ENCODE measurements at regions of chr5 and their contacts with region 1.

Region 1: GRCh38 chr5:107571621-107572536 is 98.9 kb downstream of the EFNA5 start:
- DNase-seq: peak; percentile 73
- H3K4me3 Mint-ChIP-seq: peak overlapping the region; percentile 73
- H3K27ac Mint-ChIP-seq: no peak overlapping the region
- H3K4me1 Mint-ChIP-seq: peaks cover 21% of the 10 kb centered on the region
- H3K27me3 Mint-ChIP-seq: peaks cover 23% of the 10 kb centered on the region

Region 2: GRCh38 chr5:107149243-107150005 is 422.5 kb before region 1 on chr5:
- intact Hi-C with region 1: loop called (anchors 10 kb)
- DNase-seq: no peak
- H3K4me3 Mint-ChIP-seq: no peak overlapping the region
- H3K27ac Mint-ChIP-seq: no peak overlapping the region
- H3K4me1 Mint-ChIP-seq: no peaks in the 10 kb centered on the region
- H3K27me3 Mint-ChIP-seq: peaks cover 2% of the 10 kb centered on the region

Region 3: DNA sequence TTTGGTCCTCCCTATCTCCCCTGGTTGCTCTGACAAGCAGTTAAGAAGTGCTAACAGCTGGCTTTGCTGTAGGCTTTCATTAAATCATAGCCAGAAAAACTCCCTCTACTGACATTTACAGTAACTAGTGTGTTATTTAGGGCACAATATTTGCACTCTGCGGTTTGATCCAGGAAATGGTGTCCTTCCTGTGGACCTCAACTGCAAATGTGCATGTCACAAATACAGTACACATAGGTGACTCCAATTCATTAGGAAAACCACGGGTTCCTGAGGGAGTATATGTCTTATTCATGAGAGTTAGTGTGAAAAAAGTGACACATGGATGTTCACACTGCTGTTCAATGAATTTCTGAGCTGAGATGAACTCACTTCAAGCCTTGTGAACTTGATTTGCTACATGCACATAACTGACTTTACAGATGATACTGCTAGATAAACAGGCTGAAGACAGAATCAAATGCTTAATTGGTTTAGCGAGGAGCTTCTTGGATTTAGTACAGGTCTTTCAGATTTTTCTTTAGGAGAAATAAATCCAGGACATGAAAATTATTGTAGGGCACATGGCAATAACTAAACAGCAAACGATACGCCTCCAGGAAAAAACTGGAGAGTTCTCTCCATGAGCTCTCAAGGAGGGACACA is 182.6 kb before region 1 on chr5:
- intact Hi-C with region 1: loop called (anchors 2 kb)
- DNase-seq: peak; percentile 13
- H3K4me3 Mint-ChIP-seq: peak overlapping the region; percentile 50
- H3K27ac Mint-ChIP-seq: peak overlapping the region; percentile 74
- H3K4me1 Mint-ChIP-seq: peaks cover 29% of the 10 kb centered on the region
- H3K27me3 Mint-ChIP-seq: no peaks in the 10 kb centered on the region

Region 4: GRCh38 chr5:107486489-107486888 is 85.4 kb before region 1 on chr5:
- intact Hi-C with region 1: loop called (anchors 2 kb)
- DNase-seq: peak; percentile 29
- H3K4me3 Mint-ChIP-seq: no peak overlapping the region
- H3K27ac Mint-ChIP-seq: no peak overlapping the region
- H3K4me1 Mint-ChIP-seq: peaks cover 21% of the 10 kb centered on the region
- H3K27me3 Mint-ChIP-seq: peaks cover 11% of the 10 kb centered on the region

Region 5: GRCh38 chr5:107673368-107674136 is 101.7 kb after region 1 on chr5:
- intact Hi-C with region 1: loop called (anchors 2 kb)
- DNase-seq: peak; percentile 44
- H3K4me3 Mint-ChIP-seq: peak overlapping the region; percentile 68
- H3K27ac Mint-ChIP-seq: peak overlapping the region; percentile 32
- H3K4me1 Mint-ChIP-seq: peaks cover 22% of the 10 kb centered on the region
- H3K27me3 Mint-ChIP-seq: peaks cover 63% of the 10 kb centered on the region

Measured in activated T-helper 1 cell treated with anti-CD3 and anti-CD28 coated beads, Interleukin-12 subunit alpha, Interleukin-12 subunit beta, Interleukin-2, Interleukin-4 antibody, amounts not matched to agents 30 ng/mL and 10 ng/mL and 1 ng/mL, durations not matched to agents 14 hours and 24 hours and 36 hours (primary cell).